Activated T-helper 1 cell treated with anti-CD3 and anti-CD28 coated beads, Interleukin-12 subunit alpha, Interleukin-12 subunit beta, Interleukin-2, Interleukin-4 antibody, amounts not matched to agents 30 ng/mL and 10 ng/mL and 1 ng/mL, durations not matched to agents 14 hours and 24 hours and 36 hours (primary cell): ENCODE measurements at regions of chr2 and their contacts with region 1.

Region 1: DNA sequence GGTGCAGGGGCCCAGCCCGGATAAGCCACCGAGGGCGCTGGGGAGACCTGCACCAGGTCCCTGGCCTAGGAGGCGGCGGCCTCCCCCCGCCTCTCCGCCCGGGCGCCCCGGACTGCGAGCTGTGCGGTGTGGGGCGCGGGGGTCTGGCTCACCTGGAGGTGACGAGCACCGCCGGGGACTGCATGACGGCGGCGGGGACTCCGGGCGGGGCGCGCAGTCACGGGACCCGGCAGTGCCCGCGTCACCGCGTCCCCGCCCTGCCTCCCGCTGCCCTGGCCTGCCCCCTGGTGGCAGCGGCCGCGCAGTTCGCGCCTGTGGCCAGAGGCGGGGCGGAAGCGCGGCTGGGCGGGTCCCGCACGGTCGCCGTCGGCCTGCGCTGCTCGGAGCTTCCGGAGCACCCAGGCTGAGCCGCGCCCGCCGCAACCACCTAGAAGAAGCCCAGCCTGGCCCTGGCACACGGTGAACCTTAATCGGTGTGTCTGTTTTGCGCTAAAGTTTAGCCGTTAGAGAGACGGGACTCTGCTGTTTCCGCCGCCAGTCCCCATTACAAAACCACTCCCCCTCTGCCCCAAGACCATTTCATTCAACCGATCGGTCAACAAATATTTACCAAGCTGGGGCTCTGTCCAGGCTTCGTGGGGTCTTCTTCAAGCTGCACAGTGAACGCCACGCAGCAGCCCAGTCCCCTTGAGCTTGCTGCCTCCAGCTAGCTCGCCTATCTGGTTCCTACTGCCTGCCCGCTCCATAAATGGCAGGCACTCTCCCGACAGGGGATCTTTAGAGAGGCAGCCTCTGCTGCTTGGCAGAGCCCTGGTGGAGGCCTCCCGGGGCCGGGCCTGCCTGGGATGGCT is at the start of gene HS1BP3:
- DNase-seq: peak; percentile 91
- H3K4me3 Mint-ChIP-seq: peak within 1 kb of the TSS; percentile 88
- H3K27ac Mint-ChIP-seq: peak within 1 kb of the TSS; percentile 92
- H3K4me1 Mint-ChIP-seq: peaks cover 22% of the 10 kb centered on the region
- H3K27me3 Mint-ChIP-seq: peaks cover 6% of the 10 kb centered on the region
- total RNA-seq, gene HS1BP3: 9.1 and 10.2 TPM in 2 replicates

Region 2: GRCh38 chr2:20225294-20226151 is 425.6 kb before region 1 on chr2:
- intact Hi-C with region 1: loop called (anchors 10 kb)
- DNase-seq: peak; percentile 19
- H3K4me3 Mint-ChIP-seq: peak overlapping the region; percentile 53
- H3K27ac Mint-ChIP-seq: no peak overlapping the region
- H3K4me1 Mint-ChIP-seq: no peaks in the 10 kb centered on the region
- H3K27me3 Mint-ChIP-seq: peaks cover 60% of the 10 kb centered on the region

Region 3: DNA sequence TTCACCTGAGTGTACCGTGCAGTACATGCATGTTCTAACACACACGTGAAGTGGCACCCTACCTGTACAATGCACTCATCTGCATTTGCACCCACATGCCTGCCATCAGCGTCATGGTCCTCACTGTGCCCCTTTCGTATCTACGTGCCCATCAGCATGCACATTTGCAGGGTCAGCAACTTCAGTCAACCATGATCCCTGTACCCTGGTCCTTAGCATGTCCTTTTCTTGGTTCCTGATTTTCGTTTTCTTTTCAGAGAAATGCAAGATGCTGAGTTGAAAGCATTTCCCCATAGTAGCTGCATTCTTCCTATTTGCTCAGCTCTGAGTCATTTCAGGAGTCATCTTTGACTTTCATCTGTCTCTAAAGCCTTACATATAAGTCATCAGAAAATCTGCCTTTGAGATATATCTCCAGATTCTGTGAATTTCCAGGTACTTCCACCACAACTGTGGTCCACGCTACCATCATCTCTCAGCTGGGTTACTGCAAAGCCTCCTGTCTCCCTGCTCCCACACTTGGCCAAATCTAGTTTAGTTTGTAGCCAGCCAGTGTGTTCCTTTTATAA is 285.8 kb before region 1 on chr2:
- intact Hi-C with region 1: loop called (anchors 1 kb)
- DNase-seq: peak; percentile 67
- H3K4me3 Mint-ChIP-seq: peak overlapping the region; percentile 2
- H3K27ac Mint-ChIP-seq: peak overlapping the region; percentile 77
- H3K4me1 Mint-ChIP-seq: peaks cover 37% of the 10 kb centered on the region
- H3K27me3 Mint-ChIP-seq: no peaks in the 10 kb centered on the region

Region 4: DNA sequence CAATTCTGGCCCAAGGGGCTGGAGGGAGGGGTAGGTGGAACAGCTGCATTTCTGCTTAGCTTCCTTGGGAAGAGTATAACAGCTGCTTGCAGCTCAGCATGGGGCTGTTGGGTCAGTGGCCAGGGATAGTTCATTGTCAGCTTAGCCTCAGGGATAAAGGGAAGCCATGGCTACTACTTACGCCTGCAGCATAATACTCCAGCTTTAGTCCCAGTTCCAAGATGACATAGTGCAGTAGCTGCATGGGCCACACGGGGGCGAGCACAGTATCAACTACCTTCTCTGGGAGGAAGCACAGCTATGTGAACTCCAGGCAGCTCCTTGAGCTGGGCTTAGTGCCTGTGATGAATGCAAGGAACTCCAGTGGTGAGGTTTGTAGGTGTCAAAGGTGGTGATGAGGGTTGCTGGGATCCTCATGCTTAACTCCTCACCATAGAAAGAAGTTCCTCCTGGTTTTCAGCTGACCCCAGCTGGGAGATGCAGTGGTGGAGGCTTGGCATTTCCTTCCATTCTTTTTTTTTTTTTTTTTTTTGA is 239.7 kb before region 1 on chr2:
- intact Hi-C with region 1: loop called (anchors 2 kb)
- DNase-seq: peak; percentile 48
- H3K4me3 Mint-ChIP-seq: no peak overlapping the region
- H3K27ac Mint-ChIP-seq: no peak overlapping the region
- H3K4me1 Mint-ChIP-seq: peaks cover 6% of the 10 kb centered on the region
- H3K27me3 Mint-ChIP-seq: peaks cover 34% of the 10 kb centered on the region

Region 5: DNA sequence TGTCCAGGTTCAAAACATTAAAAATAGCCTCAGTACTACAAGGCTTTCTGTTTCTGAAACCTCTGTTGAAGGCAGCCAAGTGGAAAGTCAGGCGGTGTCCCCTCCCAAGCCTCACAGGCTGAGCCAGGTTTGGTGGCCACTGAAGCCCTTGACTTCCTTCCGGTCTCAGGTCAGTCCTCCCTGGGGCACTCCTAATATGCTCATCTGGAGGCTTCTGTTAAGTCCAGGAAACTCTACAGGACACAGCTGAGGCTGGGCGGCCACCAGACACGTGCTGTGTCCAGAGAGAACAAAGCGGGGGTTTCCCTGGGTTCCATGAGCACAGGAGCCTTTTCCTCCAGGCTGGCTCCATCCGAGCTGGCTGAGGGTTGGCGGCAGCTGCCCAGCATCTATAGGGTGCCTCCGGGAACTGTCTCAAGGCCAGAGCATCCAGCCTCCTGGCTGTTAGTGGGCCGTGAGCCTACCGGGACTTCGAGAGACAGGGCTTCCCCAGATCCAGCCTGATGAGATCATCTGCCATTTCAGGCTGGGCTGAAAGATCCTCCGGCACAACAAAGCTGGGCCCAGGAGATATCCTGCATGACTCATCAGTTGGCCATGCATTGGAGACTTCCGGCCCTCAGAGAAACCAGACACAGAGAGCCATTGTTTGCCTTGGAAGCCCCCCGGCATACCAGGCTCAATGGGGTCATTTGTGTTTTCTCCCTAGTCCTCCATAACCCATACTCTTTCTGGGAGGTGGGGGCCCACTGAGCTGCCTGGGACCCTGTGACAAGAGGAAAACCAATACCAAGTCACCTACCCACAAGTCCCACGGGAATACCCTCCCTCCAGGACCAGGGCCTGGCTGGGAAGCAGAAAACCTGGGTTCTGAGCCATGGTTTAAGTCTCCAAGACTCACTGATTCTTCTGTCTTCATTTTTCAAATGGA is 71.9 kb before region 1 on chr2:
- intact Hi-C with region 1: loop called (anchors 5 kb)
- DNase-seq: no peak
- H3K4me3 Mint-ChIP-seq: no peak overlapping the region
- H3K27ac Mint-ChIP-seq: no peak overlapping the region
- H3K4me1 Mint-ChIP-seq: peaks cover 27% of the 10 kb centered on the region
- H3K27me3 Mint-ChIP-seq: no peaks in the 10 kb centered on the region

Region 6: GRCh38 chr2:20661067-20661980 is 10.2 kb after region 1 on chr2:
- intact Hi-C with region 1: loop called (anchors 1 kb)
- DNase-seq: peak; percentile 54
- H3K4me3 Mint-ChIP-seq: no peak overlapping the region
- H3K27ac Mint-ChIP-seq: no peak overlapping the region
- H3K4me1 Mint-ChIP-seq: no peaks in the 10 kb centered on the region
- H3K27me3 Mint-ChIP-seq: peaks cover 64% of the 10 kb centered on the region

Region 7: GRCh38 chr2:20822535-20823490 is 171.7 kb after region 1 on chr2 and contains the start of gene LDAH:
- intact Hi-C with region 1: loop called (anchors 1 kb)
- DNase-seq: peak; percentile 74
- H3K4me3 Mint-ChIP-seq: peak within 1 kb of the TSS; percentile 98
- H3K27ac Mint-ChIP-seq: peak within 1 kb of the TSS; percentile 98
- H3K4me1 Mint-ChIP-seq: peaks cover 28% of the 10 kb centered on the region
- H3K27me3 Mint-ChIP-seq: no peaks in the 10 kb centered on the region
- total RNA-seq, gene LDAH: 34.6 and 34.7 TPM in 2 replicates

Region 8: DNA sequence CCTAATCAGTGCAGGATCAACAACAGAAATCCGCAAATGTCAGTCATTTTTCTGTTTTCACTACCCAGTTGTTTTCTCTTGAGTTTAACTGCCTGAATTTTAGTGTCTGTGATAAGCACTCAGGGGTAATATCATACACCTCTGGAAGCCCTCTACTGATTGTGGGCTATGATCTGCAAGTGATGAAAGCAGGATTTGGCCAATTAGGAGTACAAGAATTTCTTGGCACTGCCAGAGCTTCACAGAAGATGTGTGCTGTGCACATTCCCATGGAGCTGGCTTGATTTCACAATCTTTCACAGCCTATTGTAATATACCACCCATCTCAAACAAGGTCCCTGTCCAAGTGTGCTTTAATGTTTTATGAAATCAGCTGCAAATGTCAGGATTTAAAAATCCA is 445.4 kb after region 1 on chr2:
- intact Hi-C with region 1: no loop called
- DNase-seq: no peak
- H3K4me3 Mint-ChIP-seq: no peak overlapping the region
- H3K27ac Mint-ChIP-seq: no peak overlapping the region
- H3K4me1 Mint-ChIP-seq: no peaks in the 10 kb centered on the region
- H3K27me3 Mint-ChIP-seq: no peaks in the 10 kb centered on the region